ENCODE measurements at regions of chr3 and their contacts with region 1.

Region 1: GRCh38 chr3:37054370-37054769 is 61.1 kb downstream of the MLH1 start:
- DNase-seq: no peak
- ATAC-seq: peak; percentile 86 to 93 (median 92)
- H3K4me3 ChIP-seq: peak overlapping the region in 1 of 12 donors; percentile 13
- H3K27ac ChIP-seq: peak overlapping the region; percentile 63 to 90 (median 84)
- H3K4me1 ChIP-seq: peaks cover 11 to 68% (median 45%) of the 10 kb centered on the region in 12 donors
- H3K27me3 ChIP-seq: no peaks in the 10 kb centered on the region
- CTCF ChIP-seq: no peak
- POLR2A ChIP-seq: no peak

Region 2: DNA sequence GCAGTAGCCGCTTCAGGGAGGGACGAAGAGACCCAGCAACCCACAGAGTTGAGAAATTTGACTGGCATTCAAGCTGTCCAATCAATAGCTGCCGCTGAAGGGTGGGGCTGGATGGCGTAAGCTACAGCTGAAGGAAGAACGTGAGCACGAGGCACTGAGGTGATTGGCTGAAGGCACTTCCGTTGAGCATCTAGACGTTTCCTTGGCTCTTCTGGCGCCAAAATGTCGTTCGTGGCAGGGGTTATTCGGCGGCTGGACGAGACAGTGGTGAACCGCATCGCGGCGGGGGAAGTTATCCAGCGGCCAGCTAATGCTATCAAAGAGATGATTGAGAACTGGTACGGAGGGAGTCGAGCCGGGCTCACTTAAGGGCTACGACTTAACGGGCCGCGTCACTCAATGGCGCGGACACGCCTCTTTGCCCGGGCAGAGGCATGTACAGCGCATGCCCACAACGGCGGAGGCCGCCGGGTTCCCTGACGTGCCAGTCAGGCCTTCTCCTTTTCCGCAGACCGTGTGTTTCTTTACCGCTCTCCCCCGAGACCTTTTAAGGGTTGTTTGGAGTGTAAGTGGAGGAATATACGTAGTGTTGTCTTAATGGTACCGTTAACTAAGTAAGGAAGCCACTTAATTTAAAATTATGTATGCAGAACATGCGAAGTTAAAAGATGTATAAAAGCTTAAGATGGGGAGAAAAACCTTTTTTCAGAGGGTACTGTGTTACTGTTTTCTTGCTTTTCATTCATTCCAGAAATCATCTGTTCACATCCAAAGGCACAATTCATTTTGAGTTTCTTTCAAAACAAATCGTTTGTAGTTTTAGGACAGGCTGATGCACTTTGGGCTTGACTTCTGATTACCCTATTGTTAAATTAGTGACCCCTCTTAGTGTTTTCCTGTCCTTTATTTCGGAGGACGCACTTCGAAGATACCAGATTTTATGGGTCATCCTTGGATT is 60.8 kb before region 1 on chr3 and contains the start of gene MLH1:
- intact Hi-C with region 1: loop called in 3 of 10 experiments (anchors 1 to 10 kb)
- DNase-seq: peak; percentile 94 to 97 (median 95)
- ATAC-seq: peak; percentile 94 to 97 (median 96)
- H3K4me3 ChIP-seq: peak within 1 kb of the TSS; percentile 57 to 83 (median 70)
- H3K27ac ChIP-seq: peak within 1 kb of the TSS; percentile 93 to 99 (median 98)
- H3K4me1 ChIP-seq: peaks cover 7 to 65% (median 48%) of the 10 kb centered on the region in 12 donors
- H3K27me3 ChIP-seq: no peaks in the 10 kb centered on the region
- CTCF ChIP-seq: no peak
- POLR2A ChIP-seq: peak in 1 of 2 donors; percentile 64
- total RNA-seq, gene MLH1: 44.5 to 58.4 (median 50.4) TPM

Region 3: DNA sequence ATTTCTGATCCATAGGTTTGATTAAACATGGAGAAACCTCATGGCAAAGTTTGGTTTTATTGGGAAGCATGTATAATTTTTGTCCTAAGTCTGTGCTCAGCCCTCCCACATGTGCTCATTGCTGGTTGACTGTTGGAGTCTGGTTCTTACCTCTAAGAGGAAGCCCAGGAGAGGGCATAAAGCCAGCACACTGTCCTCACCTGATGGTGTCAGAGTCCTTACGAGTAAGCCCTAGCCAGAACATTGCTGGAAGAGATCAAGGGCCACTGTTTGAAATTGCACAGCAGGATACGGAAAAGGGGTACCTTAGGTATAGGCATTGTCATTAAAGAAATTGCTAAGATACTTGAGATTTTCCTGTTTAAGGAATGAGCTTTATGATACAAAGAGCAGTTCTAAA is 39.8 kb before region 1 on chr3:
- intact Hi-C with region 1: loop called in 1 of 10 experiments (anchors 5 kb)
- DNase-seq: peak in 4 of 5 donors; percentile 71 to 90 (median 83)
- ATAC-seq: peak; percentile 68 to 81 (median 80)
- H3K4me3 ChIP-seq: no peak overlapping the region
- H3K27ac ChIP-seq: peak overlapping the region; percentile 11 to 93 (median 76)
- H3K4me1 ChIP-seq: peaks cover 0 to 40% (median 8%) of the 10 kb centered on the region in 12 donors
- H3K27me3 ChIP-seq: no peaks in the 10 kb centered on the region
- CTCF ChIP-seq: no peak
- POLR2A ChIP-seq: no peak

Region 4: DNA sequence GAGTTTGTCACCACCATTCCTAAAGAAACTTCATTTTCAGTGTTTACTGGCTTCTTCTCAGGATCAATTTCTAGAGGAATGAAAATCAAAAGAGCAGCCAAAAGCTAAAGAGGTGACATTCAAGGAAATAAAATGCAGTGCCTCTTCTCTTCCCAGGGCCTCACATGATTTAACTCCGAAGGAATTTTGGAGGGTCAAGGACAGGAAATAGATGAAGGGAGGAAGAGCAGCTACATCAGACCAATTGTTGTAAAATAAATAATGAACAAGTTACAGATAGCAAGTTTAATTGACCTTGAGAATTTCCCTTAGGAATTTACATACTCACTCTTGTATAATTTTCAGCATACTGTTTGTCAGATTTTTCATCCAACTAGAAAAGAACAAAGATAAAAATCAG is 41.9 kb after region 1 on chr3:
- intact Hi-C with region 1: loop called in 1 of 10 experiments (anchors 5 kb)
- DNase-seq: no peak
- ATAC-seq: peak in 2 of 4 donors; percentile 30 to 54
- H3K4me3 ChIP-seq: no peak overlapping the region
- H3K27ac ChIP-seq: peak overlapping the region in 10 of 12 donors; percentile 27 to 64 (median 32)
- H3K4me1 ChIP-seq: peaks cover 0 to 37% (median 19%) of the 10 kb centered on the region in 12 donors
- H3K27me3 ChIP-seq: no peaks in the 10 kb centered on the region
- CTCF ChIP-seq: no peak
- POLR2A ChIP-seq: no peak

Region 5: GRCh38 chr3:37114251-37115145 is 60.1 kb after region 1 on chr3:
- intact Hi-C with region 1: loop called in 1 of 10 experiments (anchors 2 kb)
- DNase-seq: no peak
- ATAC-seq: no peak
- H3K4me3 ChIP-seq: no peak overlapping the region
- H3K27ac ChIP-seq: peak overlapping the region in 1 of 12 donors; percentile 11
- H3K4me1 ChIP-seq: peaks cover 0 to 38% (median 10%) of the 10 kb centered on the region in 12 donors
- H3K27me3 ChIP-seq: no peaks in the 10 kb centered on the region
- CTCF ChIP-seq: no peak
- POLR2A ChIP-seq: no peak

Region 6: GRCh38 chr3:37163262-37164015 is 109.1 kb after region 1 on chr3:
- intact Hi-C with region 1: no loop called
- DNase-seq: no peak
- ATAC-seq: no peak
- H3K4me3 ChIP-seq: no peak overlapping the region
- H3K27ac ChIP-seq: peak overlapping the region in 3 of 12 donors; percentile 12 to 43 (median 22)
- H3K4me1 ChIP-seq: peaks cover 0 to 16% (median 9%) of the 10 kb centered on the region in 12 donors
- H3K27me3 ChIP-seq: no peaks in the 10 kb centered on the region
- CTCF ChIP-seq: no peak
- POLR2A ChIP-seq: no peak